ENCODE measurements at regions of chr4 and their contacts with region 1.

Region 1: GRCh38 chr4:185395956-185396723 is 416 bp upstream of the LRP2BP start:
- DNase-seq: peak; percentile 97
- ATAC-seq: peak; percentile 91
- H3K4me3 ChIP-seq: peak overlapping the region; percentile 79
- H3K27ac ChIP-seq: peak overlapping the region; percentile 97
- H3K4me1 ChIP-seq: peaks cover 19% of the 10 kb centered on the region
- H3K27me3 ChIP-seq: no peaks in the 10 kb centered on the region
- CTCF ChIP-seq: no peak
- EP300 ChIP-seq: 0 out of 4 replicates have a peak, but pooled peaks of 1 of the 2 experiments have one; percentile 55
- POLR2A ChIP-seq: peak; percentile 86
- RAD21 ChIP-seq: no peak

Region 2: DNA sequence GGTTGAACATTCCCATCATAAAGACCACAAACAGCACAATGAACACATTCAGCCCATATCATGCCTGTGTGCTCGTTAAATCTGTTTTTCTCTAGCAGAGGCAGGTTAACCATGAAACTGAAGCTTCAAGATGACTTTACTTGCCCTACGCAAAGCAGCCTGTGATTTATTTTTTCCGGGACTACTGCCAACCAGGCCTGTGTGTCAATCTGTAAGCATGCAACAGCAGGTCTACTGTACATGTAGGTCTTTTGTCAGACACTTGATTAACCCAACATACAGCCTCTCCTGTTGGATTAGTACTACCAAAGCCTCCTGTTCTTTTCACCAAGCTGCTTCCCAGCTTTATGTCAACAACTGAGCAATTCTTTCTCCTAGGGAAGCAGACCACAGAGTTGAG is 484.8 kb before region 1 on chr4:
- CTCF ChIA-PET with region 1: no interaction called
- POLR2A ChIA-PET with region 1: no interaction called
- RAD21 ChIA-PET with region 1: no interaction called
- SMC1A ChIA-PET with region 1: no interaction called
- in situ Hi-C with region 1: no loop called
- intact Hi-C with region 1: no loop called
- DNase-seq: no peak
- ATAC-seq: no peak
- H3K4me3 ChIP-seq: no peak overlapping the region
- H3K27ac ChIP-seq: no peak overlapping the region
- H3K4me1 ChIP-seq: no peaks in the 10 kb centered on the region
- H3K27me3 ChIP-seq: no peaks in the 10 kb centered on the region; a peak in 1 of 4 replicates
- CTCF ChIP-seq: no peak
- EP300 ChIP-seq: no peak
- POLR2A ChIP-seq: no peak
- RAD21 ChIP-seq: no peak

Region 3: DNA sequence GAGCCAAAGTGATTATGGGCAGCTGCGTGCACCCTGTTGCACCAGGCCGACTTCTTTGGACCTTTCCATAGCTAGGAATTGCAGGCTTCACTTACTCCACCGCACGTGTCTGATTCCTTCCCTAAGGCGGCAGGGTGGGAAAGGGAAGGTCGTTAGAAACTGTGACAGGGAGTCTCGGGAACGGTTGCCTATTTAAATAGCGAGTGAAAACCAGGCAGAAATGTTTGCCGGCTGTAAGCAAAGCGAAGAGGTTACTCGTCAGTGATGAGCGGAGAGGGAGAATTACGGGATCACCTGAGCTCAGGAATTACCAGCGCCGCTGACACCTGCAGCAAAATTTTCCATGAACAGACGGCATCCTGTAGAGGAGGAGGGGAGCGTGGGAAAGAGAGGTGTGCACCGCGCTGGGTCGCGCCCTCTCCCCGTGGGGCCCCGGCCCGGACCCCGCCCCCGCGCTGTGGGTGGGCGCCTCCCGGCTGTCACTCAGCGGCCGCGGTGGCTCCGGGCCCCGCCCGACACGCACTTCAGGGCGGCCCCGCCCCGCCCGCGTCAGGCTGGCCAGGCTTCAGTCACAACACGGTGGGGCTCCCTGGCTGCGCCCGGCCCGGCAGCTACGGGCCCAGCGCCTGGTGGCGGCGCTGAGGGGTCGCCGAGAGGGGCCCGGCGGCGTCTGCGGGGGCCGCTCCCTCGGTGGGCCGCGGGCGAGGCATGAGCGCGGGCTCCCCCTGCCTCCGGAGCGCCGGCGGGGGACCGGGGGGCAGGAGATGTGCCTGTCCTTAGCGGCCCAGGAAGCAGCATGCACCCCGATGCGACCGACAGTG is 186.9 kb before region 1 on chr4 and contains the start of gene SNX25:
- CTCF ChIA-PET with region 1: interaction called, 6 read pairs
- POLR2A ChIA-PET with region 1: interaction called, 9 read pairs
- RAD21 ChIA-PET with region 1: interaction called, 7 read pairs
- SMC1A ChIA-PET with region 1: interaction called, 10 read pairs
- in situ Hi-C with region 1: no loop called
- intact Hi-C with region 1: loop called (anchors 5 kb)
- DNase-seq: no peak
- ATAC-seq: peak; percentile 80
- H3K4me3 ChIP-seq: peak within 1 kb of the TSS; percentile 100
- H3K27ac ChIP-seq: peak within 1 kb of the TSS; percentile 84
- H3K4me1 ChIP-seq: peaks cover 28% of the 10 kb centered on the region
- H3K27me3 ChIP-seq: no peaks in the 10 kb centered on the region
- CTCF ChIP-seq: peak in 2 of 3 experiments; percentile 9 to 27; a peak in 1 of 6 replicates
- EP300 ChIP-seq: no peak
- POLR2A ChIP-seq: peak; percentile 85
- RAD21 ChIP-seq: peak; percentile 41; the same call in 1 of the 2 replicates
- polyA plus RNA-seq, gene SNX25: 19.6 to 27.8 TPM

Region 4: GRCh38 chr4:185343726-185344581 is 52.2 kb before region 1 on chr4:
- CTCF ChIA-PET with region 1: interaction called, 5 read pairs
- POLR2A ChIA-PET with region 1: interaction called, 14 read pairs
- RAD21 ChIA-PET with region 1: interaction called, 7 read pairs
- SMC1A ChIA-PET with region 1: interaction called, 14 read pairs
- in situ Hi-C with region 1: no loop called
- intact Hi-C with region 1: no loop called
- DNase-seq: no peak
- ATAC-seq: peak; percentile 48
- H3K4me3 ChIP-seq: no peak overlapping the region
- H3K27ac ChIP-seq: peak overlapping the region; percentile 97
- H3K4me1 ChIP-seq: peaks cover 65% of the 10 kb centered on the region
- H3K27me3 ChIP-seq: no peaks in the 10 kb centered on the region
- CTCF ChIP-seq: no peak
- EP300 ChIP-seq: peak; percentile 26 to 51; a peak in 1 of 4 replicates
- POLR2A ChIP-seq: peak; percentile 49; the same call in 1 of the 2 replicates
- RAD21 ChIP-seq: no peak

Region 5: GRCh38 chr4:185369731-185370130 is 26.4 kb before region 1 on chr4:
- CTCF ChIA-PET with region 1: no interaction called
- POLR2A ChIA-PET with region 1: interaction called, 10 read pairs
- RAD21 ChIA-PET with region 1: no interaction called
- SMC1A ChIA-PET with region 1: interaction called, 5 read pairs
- in situ Hi-C with region 1: no loop called
- intact Hi-C with region 1: no loop called
- DNase-seq: no peak
- ATAC-seq: no peak
- H3K4me3 ChIP-seq: no peak overlapping the region
- H3K27ac ChIP-seq: no peak overlapping the region
- H3K4me1 ChIP-seq: no peaks in the 10 kb centered on the region
- H3K27me3 ChIP-seq: no peaks in the 10 kb centered on the region
- CTCF ChIP-seq: no peak
- EP300 ChIP-seq: no peak
- POLR2A ChIP-seq: no peak
- RAD21 ChIP-seq: no peak

Region 6: GRCh38 chr4:185425647-185426352 is 29.7 kb after region 1 on chr4 and contains the start of gene UFSP2:
- CTCF ChIA-PET with region 1: interaction called, 5 read pairs
- POLR2A ChIA-PET with region 1: interaction called, 37 read pairs
- RAD21 ChIA-PET with region 1: interaction called, 15 read pairs
- SMC1A ChIA-PET with region 1: interaction called, 25 read pairs
- in situ Hi-C with region 1: no loop called
- intact Hi-C with region 1: loop called (anchors 2 kb)
- DNase-seq: peak; percentile 84
- ATAC-seq: peak; percentile 91
- H3K4me3 ChIP-seq: peak within 1 kb of the TSS; percentile 83
- H3K27ac ChIP-seq: peak within 1 kb of the TSS; percentile 92
- H3K4me1 ChIP-seq: no peaks in the 10 kb centered on the region
- H3K27me3 ChIP-seq: no peaks in the 10 kb centered on the region
- CTCF ChIP-seq: no peak
- EP300 ChIP-seq: peak in 1 of 2 experiments; percentile 50; a peak in 1 of 4 replicates
- POLR2A ChIP-seq: peak; percentile 75
- RAD21 ChIP-seq: 0 out of 2 replicates have a peak, but pooled peaks have one; percentile 4
- polyA plus RNA-seq, gene UFSP2: 40.9 to 42.5 TPM

Region 7: GRCh38 chr4:185471235-185472102 is 75.3 kb after region 1 on chr4 and contains the start of gene CCDC110:
- CTCF ChIA-PET with region 1: no interaction called
- POLR2A ChIA-PET with region 1: interaction called, 3 read pairs
- RAD21 ChIA-PET with region 1: no interaction called
- SMC1A ChIA-PET with region 1: interaction called, 4 read pairs
- in situ Hi-C with region 1: no loop called
- intact Hi-C with region 1: loop called (anchors 2 kb)
- DNase-seq: peak; percentile 47
- ATAC-seq: peak; percentile 94
- H3K4me3 ChIP-seq: peak within 1 kb of the TSS; percentile 78
- H3K27ac ChIP-seq: peak within 1 kb of the TSS; percentile 81
- H3K4me1 ChIP-seq: peaks cover 13% of the 10 kb centered on the region
- H3K27me3 ChIP-seq: peaks cover 0 to 2% of the 10 kb centered on the region in 2 experiments; a peak in 1 of 4 replicates
- CTCF ChIP-seq: peak; percentile 40 to 72 (median 56); a peak in 5 of 6 replicates
- EP300 ChIP-seq: no peak
- POLR2A ChIP-seq: peak; percentile 86
- RAD21 ChIP-seq: peak; percentile 65
- polyA plus RNA-seq, gene CCDC110: 1.2 to 2.1 TPM

Measured in GM12878 (cell line).